Cardiac septum (tissue), 1 donor: ENCODE measurements at regions of chr16 and their contacts with region 1.

Region 1: GRCh38 chr16:53054670-53055485 is at the start of gene CHD9:
- DNase-seq: peak; percentile 93
- total RNA-seq, gene CHD9: 64.6 TPM

Region 2: GRCh38 chr16:53091466-53092211 is 36.8 kb after region 1 on chr16:
- intact Hi-C with region 1: loop called (anchors 2 kb)
- DNase-seq: no peak

Region 3: DNA sequence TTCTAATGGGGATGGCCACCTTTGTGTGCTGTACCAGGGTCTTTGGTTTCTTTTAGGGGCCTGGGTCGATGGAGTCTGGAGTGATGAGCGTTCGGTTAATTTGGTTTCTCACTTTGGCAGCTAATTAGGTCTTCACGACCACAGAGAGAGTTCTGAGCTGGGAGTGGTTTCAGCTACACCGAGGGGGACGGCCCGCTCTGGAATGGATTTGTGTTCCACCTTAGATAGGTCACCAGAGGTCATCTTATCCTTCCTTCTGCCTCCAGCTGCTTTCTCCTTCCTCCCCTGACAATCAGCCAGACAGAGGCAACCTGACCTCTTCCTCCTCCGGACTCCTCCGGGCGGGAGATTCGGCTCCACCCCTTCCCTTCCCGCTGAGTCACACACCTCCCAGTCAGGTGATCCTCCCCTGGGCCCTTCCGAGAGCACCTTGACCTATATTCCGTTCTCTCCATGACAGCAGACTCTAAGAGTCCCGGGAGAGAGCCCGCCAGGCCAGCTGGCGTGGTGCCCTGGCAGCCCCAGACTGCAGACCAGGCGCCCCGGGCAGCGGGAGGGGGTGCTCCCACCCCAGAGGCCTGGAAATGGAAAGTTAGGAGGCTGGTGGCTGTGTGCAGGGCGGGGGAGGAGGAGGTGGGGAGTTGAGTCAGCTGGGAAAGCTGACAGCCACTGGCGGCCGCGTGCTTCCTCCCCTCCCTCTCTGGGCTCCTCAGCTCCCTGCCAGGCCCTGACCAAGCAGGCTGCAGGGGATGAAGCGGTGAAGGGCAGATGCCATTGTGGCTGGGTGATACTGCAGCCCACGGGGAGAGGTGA is 44.6 kb after region 1 on chr16:
- intact Hi-C with region 1: loop called (anchors 2 kb)
- DNase-seq: peak; percentile 95

Region 4: DNA sequence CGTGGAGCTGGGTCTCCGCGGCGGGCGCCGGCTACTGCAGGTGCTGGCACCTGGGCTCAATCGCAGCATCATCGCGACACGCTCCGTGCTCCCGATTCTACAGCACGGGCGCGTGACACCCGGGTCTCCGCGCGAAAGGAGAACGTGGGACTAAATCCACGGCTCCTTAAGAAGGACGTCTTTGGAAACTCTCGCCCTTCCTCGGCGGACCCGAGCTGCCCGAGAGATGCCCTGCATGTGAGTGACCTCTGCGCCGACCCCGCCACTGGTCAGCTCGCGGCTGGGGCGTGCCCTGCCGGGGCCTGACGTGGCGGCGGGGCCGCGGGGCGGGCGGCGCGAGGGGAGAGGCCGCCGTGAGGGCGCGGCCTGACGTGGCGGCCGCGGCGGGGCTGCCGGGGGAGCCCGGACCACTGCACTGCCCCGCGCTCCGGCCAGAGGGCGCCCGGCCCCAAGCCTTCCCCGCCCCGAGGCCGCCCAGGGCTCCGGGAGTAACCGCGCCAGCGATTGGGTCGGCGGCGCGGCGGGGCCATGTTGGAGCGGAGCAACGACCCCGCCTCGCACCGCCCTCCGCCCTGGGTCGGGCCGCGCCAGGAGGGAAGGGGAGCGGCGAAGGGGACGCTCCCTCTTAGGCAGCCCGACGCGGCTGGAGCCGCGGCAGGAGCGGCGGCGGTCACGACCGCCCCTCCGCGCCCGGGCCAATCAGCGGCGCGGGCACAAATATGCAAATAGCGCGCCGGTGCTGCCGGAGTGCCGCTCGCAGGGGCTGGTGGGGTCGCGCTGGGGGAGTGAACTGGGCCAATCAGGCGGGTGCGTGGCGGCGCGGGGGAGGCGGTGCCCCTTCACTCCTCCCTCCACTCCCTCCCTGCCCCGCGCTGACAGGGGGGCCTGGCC is 75.5 kb after region 1 on chr16:
- intact Hi-C with region 1: loop called (anchors 1 kb)
- DNase-seq: peak; percentile 97

Region 5: GRCh38 chr16:53159781-53160436 is 105.0 kb after region 1 on chr16:
- intact Hi-C with region 1: loop called (anchors 2 kb)
- DNase-seq: no peak

Region 6: DNA sequence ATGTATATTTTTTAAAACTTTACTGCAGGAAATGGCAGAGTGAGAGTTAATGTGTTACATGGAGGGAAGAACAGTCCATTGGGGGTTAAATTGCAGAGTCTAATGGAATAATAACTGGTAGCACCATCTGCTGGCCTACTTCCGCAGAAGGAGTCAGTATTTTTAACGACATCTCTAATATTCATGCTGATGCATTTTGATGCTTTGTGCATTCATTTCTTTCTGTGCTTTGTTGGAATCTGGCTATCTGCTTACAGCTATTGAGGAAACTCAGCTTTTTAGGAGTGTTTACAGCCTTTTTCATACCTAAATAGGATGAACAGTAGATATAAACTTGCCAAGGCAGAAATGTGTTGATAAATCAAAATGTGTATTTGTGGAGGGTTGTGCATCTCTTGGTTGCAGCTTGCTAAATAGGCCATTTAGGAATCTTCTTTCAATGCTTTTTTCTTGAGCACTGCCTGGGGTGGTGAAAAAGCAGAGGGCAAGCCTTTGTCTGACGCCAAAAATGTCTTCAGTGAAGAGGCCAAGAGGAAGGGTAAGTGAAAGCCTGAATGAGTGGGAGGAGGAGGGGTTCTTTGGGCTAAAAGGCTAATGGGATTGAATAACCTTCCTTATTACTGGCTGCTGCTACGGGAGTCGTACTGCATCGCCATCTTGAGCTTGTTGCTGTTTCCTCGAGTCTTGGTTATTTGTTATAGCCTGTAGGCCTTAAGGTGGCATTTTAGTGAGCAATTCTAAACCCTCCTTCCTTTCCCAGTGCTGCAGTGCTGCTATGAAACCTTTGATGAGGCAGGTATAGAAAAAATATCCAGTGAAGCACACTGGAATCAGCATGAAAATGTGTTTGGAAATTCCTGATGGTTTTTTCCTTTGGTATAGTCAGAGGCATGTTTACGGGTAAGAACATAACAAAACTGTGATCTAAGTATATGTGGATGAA is 153.2 kb after region 1 on chr16:
- intact Hi-C with region 1: loop called (anchors 2 kb)
- DNase-seq: no peak

Region 7: GRCh38 chr16:53282975-53283946 is 228.4 kb after region 1 on chr16:
- intact Hi-C with region 1: loop called (anchors 5 kb)
- DNase-seq: no peak